Breast epithelium (tissue), 4 donors: ENCODE measurements at regions of chrX and their contacts with region 1.

Region 1: GRCh38 chrX:43702660-43703059 is 46.6 kb downstream of the MAOA start:
- DNase-seq: no peak
- H3K4me3 ChIP-seq: no peak overlapping the region
- H3K27ac ChIP-seq: peak overlapping the region; percentile 69 to 81
- H3K4me1 ChIP-seq: no peaks in the 10 kb centered on the region
- H3K27me3 ChIP-seq: peaks cover 0 to 46% of the 10 kb centered on the region in 2 donors
- CTCF ChIP-seq: no peak
- POLR2A ChIP-seq: no peak

Region 2: GRCh38 chrX:43436517-43436916 is 266.1 kb before region 1 on chrX:
- intact Hi-C with region 1: no loop called
- DNase-seq: no peak
- H3K4me3 ChIP-seq: no peak overlapping the region
- H3K27ac ChIP-seq: no peak overlapping the region
- H3K4me1 ChIP-seq: no peaks in the 10 kb centered on the region
- H3K27me3 ChIP-seq: no peaks in the 10 kb centered on the region
- CTCF ChIP-seq: no peak
- POLR2A ChIP-seq: no peak

Region 3: DNA sequence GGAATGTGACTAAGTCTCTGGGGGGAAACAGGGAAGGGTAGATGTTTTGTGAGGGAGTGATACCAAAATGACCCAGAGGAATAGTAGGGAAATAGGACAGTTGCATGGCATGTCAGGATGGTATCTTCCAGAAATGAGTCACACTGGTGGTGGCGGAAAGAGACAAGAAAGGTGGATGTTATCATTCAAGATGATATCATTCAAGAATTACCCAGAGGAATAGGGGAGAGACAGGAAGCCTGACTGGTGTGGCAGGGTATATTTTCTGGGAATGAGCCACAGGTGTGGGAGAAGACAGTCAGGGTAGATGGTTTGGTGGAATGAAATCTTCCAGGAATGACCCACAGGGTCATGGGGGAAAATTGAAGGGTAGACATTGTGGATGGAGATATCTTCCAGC is 14.5 kb after region 1 on chrX:
- intact Hi-C with region 1: loop called (anchors 1 kb)
- DNase-seq: no peak
- H3K4me3 ChIP-seq: no peak overlapping the region
- H3K27ac ChIP-seq: no peak overlapping the region
- H3K4me1 ChIP-seq: no peaks in the 10 kb centered on the region
- H3K27me3 ChIP-seq: peaks cover 0 to 15% of the 10 kb centered on the region in 2 donors
- CTCF ChIP-seq: no peak
- POLR2A ChIP-seq: no peak